Activated CD4-positive, alpha-beta T cell treated with anti-CD3 and anti-CD28 coated beads for 36 hours (primary cell): ENCODE measurements at regions of chr12 and their contacts with region 1.

Region 1: DNA sequence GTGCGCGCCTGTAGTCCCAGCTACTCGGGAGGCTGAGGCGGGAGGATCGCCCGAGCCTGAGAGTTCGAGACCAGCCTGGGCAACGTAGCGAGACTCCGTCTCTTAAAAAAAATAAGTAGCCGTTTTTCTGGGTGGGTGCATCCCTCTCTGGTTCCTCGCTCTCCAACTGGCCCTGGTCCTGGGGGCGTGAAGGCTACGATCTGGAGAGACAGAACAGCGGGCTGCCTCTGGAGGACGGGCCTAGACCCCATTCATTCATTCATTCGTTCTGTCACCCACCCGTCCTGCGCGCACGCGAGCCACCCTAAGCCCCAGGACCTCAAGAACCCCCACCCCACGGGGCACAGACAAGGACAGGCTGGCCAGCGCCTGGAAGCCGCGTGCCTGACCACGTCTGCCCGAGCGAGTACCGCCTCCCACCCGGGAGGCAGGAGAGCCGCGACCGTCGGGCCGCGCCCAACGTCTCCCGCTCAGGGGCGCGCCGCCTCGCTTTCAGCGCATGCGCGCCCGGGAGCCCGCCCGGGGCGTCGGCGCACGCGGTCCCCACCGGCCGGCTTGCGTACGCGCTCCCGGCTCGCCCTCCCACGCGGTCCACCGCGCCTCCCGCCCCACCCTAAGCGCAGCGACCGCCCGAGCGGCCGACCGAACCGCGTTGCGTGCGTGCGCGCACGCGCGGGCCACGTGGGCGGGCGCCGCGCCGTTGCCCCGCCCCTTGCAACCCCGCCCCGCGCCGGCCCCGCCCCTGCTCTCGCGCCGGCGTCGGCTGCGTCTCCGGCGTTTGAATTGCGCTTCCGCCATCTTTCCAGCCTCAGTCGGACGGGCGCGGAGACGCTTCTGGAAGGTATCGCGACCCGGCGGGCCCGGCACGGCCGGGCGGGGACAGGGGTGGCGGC is at the start of gene RAN:
- DNase-seq: peak; percentile 96
- ATAC-seq: peak; percentile 73
- H3K4me3 Mint-ChIP-seq: peak within 1 kb of the TSS; percentile 99
- H3K27ac Mint-ChIP-seq: peak within 1 kb of the TSS; percentile 100
- H3K4me1 Mint-ChIP-seq: peaks cover 56% of the 10 kb centered on the region
- H3K27me3 Mint-ChIP-seq: no peaks in the 10 kb centered on the region
- total RNA-seq, gene RAN: 1,919 to 2,242 TPM

Region 2: GRCh38 chr12:130818635-130819576 is 52.6 kb before region 1 on chr12:
- CTCF ChIA-PET with region 1: interaction called, 3 read pairs
- POLR2A ChIA-PET with region 1: no interaction called
- intact Hi-C with region 1: loop called in 1 of 2 experiments (anchors 2 kb)
- DNase-seq: peak; percentile 89
- ATAC-seq: peak; percentile 92
- H3K4me3 Mint-ChIP-seq: peak overlapping the region; percentile 77
- H3K27ac Mint-ChIP-seq: peak overlapping the region; percentile 86
- H3K4me1 Mint-ChIP-seq: peaks cover 6% of the 10 kb centered on the region
- H3K27me3 Mint-ChIP-seq: no peaks in the 10 kb centered on the region

Region 3: DNA sequence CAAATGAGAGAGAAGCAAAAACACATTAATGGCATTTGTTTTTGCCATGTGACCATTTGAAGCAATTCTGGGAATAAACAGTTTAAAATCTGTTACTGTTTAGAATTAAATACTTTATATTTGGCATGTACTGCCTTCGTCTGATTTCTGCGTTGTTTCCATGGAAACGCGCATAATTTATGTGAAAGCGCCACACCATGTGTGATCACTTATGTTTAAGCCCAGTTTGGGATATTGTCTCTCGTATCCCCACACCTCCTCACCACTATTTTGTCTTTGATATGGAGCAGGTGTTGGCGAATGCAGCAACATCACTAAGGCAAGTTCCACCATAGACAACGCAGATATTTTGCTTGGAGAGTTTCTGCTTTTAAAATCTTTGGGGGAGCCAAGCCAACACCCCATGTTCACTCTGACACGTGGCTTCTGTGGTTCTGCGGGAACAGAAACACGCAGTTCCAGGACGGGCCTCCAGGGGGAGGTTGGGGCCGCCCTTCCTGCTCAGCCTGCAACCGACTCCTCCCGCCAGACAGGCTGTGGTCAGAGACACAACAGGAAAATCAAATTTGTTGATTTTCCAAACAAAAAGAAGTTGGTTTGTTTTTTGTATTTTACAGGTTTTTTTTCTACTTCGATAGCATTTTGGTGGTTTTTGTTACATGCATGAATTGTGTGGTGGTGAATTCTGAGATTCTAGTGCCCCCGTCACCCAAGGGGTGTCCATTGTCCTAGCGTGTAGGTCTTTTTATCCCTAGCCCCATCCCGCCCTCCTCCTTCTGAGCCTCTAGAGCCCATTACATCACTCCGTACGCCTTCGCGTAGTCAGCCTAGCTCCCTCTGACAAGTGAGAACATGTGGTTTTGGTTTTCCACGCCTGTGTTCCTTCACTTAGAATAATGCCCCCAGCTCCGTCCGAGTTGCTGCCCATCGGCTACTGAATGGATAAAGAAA is 737.5 kb after region 1 on chr12:
- CTCF ChIA-PET with region 1: no interaction called
- POLR2A ChIA-PET with region 1: no interaction called
- intact Hi-C with region 1: loop called in 1 of 2 experiments (anchors 10 kb)
- DNase-seq: peak; percentile 79
- ATAC-seq: peak; percentile 40
- H3K4me3 Mint-ChIP-seq: no peak overlapping the region
- H3K27ac Mint-ChIP-seq: no peak overlapping the region
- H3K4me1 Mint-ChIP-seq: peaks cover 48% of the 10 kb centered on the region
- H3K27me3 Mint-ChIP-seq: no peaks in the 10 kb centered on the region

Region 4: GRCh38 chr12:131928711-131929580 is 1057.4 kb after region 1 on chr12 and contains the start of gene PUS1:
- CTCF ChIA-PET with region 1: no interaction called
- POLR2A ChIA-PET with region 1: interaction called, 3 read pairs
- intact Hi-C with region 1: loop called in 1 of 2 experiments (anchors 2 kb)
- DNase-seq: peak; percentile 97
- ATAC-seq: peak; percentile 89
- H3K4me3 Mint-ChIP-seq: peak within 1 kb of the TSS; percentile 97
- H3K27ac Mint-ChIP-seq: peak within 1 kb of the TSS; percentile 85
- H3K4me1 Mint-ChIP-seq: peaks cover 25% of the 10 kb centered on the region
- H3K27me3 Mint-ChIP-seq: no peaks in the 10 kb centered on the region
- total RNA-seq, gene PUS1: 37.8 to 56.5 TPM

Region 5: DNA sequence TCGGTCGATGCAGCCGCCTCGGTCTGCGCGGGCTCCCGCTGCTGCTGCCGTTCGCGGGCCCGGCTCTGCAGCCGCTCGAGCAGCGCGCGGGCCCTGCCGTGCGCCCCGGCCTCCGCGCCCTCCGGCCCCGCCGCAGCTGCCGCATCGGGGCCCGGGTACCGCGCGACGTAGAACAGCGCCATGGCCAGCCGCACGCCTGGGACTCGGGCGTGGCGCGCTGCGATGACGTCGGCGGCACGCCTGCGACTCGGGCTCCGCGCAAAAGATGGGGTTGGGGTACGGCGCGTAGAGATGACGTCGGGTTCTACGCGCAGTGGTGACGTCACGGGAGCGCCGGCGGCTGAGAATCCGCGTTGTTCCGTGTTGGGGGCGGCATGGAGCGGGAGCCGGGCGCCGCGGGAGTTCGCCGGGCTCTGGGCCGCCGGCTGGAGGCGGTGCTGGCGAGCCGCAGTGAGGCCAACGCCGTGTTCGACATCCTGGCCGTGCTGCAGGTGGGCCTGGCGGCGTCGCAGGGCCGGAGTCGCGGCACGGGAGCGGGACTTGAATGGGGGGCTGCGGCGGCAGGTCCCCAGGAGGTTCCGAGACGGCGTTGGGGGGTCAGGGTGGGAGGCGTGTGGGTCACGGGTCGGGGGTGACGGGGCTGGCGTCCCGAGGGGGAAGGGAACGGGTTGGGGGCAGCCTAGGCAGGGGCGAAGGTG is 1272.7 kb after region 1 on chr12 and contains the starts of genes DDX51 and NOC4L:
- CTCF ChIA-PET with region 1: no interaction called
- POLR2A ChIA-PET with region 1: no interaction called
- intact Hi-C with region 1: loop called in 1 of 2 experiments (anchors 5 kb)
- DNase-seq: peak; percentile 97
- ATAC-seq: peak; percentile 94
- H3K4me3 Mint-ChIP-seq: peak within 1 kb of the TSS; percentile 88
- H3K27ac Mint-ChIP-seq: peak within 1 kb of the TSS; percentile 86
- H3K4me1 Mint-ChIP-seq: peaks cover 32% of the 10 kb centered on the region
- H3K27me3 Mint-ChIP-seq: no peaks in the 10 kb centered on the region
- total RNA-seq, gene DDX51: 19.2 to 31.4 TPM
- total RNA-seq, gene NOC4L: 30.5 to 35.7 TPM